Head of caudate nucleus (tissue), 42 donors: ENCODE measurements at regions of chr1 and their contacts with region 1.

Region 1: GRCh38 chr1:236603991-236604904 is at the start of gene HEATR1:
- DNase-seq: peak; percentile 90 to 98 (median 95)

Region 2: GRCh38 chr1:236103646-236104218 is 500.5 kb before region 1 on chr1:
- intact Hi-C with region 1: loop called (anchors 10 kb)
- DNase-seq: peak in 40 of 42 donors; percentile 23 to 89 (median 66)

Region 3: GRCh38 chr1:236689713-236690569 is 85.7 kb after region 1 on chr1:
- intact Hi-C with region 1: loop called (anchors 10 kb)
- DNase-seq: peak in 4 of 42 donors; percentile 14 to 51 (median 33)

Region 4: GRCh38 chr1:236795035-236795756 is 190.9 kb after region 1 on chr1 and contains the start of gene MTR:
- intact Hi-C with region 1: loop called (anchors 1 kb)
- DNase-seq: peak; percentile 96 to 99 (median 98)